HEK293T (cell line): ENCODE measurements at regions of chr10 and their contacts with region 1.

Region 1: DNA sequence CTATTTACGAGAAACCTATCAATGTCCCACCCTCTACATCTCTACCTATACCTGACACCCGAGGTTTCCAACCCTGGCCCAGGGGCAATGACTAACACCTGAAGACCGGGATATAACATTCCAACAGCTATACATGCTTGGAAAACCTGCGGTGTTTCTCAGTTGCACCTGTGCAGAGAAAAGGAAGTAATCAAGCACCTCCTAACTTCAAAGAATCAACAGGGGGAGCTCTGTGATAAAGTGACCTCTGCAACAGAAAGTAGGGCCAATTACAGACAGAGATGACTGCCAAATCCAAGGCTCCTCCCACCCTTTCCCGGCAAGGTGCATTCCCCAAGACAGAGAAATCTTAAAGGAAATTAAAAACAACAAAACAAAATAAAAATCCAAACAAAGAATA is 41.3 kb downstream of the CCDC6 start:
- DNase-seq: no peak

Region 2: DNA sequence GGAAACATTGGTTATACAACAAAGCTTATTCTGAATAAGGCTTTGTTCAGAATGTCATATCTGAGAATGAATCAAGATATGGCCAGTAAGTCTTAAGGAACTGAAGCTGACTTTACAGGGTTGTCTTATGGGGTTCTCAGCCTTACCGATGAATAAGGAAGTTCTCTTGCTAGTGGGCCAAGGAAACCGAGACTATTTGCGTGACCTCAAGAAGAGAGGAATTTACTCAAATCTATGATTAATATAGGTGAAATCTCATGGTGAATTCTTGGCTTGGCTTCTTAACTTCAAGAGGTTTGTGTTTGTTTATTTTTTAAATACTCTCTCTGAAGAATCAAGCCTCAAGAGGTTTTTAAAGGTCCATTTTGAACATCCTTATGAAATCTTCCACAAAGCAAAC is 107.1 kb before region 1 on chr10:
- CTCF ChIA-PET with region 1: no interaction called
- POLR2A ChIA-PET with region 1: no interaction called
- DNase-seq: no peak

Region 3: DNA sequence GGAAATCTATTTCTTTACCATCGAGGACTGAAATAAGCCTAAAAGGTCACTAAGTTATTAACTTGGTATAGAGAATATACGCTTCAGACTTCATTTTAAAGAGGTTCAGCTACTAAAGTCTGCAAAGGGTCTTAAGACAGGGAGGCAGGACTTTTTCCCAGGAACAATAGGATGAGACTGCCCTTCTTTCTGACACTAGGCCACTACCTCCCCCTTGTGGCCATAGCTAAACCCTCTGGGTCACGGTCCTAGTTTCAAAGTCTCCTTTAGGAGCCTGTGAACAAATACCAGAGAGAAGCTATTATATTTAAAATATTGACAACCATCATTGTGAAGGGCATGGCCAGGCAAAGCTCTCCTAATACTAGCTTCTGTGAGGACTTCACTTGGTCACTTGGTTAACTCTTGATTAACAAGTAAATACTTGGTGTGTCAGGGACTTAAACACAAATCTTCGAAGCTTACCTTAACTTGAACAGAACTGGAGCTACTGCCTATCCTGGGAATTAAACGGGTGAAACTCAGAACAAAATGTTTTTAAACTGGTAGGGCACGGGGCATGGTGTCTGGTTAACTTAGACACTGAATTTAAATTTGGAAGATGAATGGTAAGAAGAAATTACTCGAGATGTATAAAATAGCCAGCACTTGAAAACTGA is 34.4 kb before region 1 on chr10:
- CTCF ChIA-PET with region 1: no interaction called
- POLR2A ChIA-PET with region 1: no interaction called
- DNase-seq: peak; percentile 69

Region 4: DNA sequence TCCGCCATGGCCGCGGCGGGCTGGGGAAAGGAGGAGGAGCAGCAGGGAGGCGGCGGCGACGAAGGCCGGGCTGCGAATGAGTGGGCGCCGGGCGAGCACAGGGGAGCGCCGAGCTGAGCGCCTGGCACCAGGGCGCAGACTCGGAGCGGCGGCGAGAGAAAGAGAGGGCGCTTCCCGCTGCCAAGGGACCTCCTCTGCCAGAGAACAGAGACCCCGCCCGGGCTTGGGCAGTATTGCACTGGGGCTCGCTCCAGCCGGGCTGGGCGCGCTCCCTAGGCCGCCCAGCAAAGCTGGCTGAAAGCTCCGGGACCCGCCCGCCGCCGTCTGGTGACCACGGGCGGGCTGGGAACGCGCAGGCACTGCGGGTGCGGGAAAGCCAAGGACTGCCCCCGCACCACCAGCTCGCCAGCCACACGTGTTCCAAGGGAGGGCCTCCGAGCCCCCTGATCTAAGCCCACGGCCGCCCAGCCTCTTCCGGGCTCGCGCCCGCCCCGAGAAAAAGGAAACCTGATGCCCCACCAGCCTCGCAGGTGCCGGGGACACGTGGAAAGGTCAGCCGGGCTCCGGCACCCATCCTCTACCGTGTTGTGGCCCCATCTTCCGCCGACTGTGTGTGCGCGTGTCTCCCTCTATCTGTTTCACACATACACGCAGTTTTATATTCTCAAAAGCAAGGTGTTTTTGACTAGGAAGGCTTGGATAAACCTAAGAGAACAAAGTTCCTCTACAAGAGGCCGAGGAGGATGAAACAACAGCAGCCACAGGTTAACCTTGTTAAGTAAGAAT is 41.5 kb after region 1 on chr10 and contains the start of gene CCDC6:
- CTCF ChIA-PET with region 1: interaction called, 4 read pairs
- POLR2A ChIA-PET with region 1: interaction called, 16 read pairs
- DNase-seq: peak; percentile 86

Region 5: DNA sequence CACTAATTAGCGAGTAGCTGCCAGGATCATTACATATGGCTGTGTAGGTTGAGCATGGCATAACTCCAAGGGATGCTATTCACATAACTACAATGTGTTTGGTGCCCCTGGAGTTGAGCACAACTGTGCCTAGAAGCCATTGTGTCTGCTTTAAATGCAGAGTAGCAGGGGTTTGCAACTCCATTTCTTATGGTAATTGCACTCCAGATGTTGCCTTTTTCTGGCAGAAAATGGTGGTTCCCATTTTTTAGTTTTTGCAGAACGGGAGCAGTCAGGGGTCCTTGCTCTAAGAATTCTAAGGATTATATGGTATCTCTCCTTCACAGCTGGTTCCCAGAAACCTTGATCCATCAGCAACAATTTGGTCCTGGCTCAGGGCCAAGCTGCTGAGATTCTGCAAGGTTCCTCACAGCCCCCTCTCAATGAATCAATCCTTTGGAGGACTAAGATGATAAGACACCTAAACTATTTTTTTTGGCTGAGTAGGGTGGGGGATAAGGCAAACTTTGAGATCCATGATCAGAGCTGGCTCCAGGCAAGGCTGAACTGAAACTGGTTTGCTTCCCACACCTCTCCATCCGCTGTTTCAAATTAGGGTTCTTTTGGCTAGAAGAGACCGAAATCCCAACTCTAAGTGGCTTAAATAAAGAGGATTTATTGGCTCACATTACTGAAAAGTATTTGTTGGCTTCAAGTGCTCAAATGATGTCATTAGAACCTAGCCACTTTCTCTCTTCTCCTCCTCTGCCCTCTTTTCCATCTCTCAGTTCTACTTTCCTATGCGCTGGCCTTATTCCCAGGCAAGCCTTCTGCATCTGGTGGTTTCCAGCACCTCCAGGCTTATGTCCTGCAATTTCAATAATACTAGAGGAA is 138.8 kb after region 1 on chr10:
- CTCF ChIA-PET with region 1: no interaction called
- POLR2A ChIA-PET with region 1: no interaction called
- DNase-seq: no peak